ENCODE measurements at regions of chr10 and their contacts with region 1.

Region 1: GRCh38 chr10:26556748-26557640 is 118.9 kb downstream of the APBB1IP start:
- DNase-seq: no peak
- H3K4me3 ChIP-seq: no peak overlapping the region
- H3K27ac ChIP-seq: no peak overlapping the region
- H3K4me1 ChIP-seq: no peaks in the 10 kb centered on the region
- H3K27me3 ChIP-seq: no peaks in the 10 kb centered on the region
- CTCF ChIP-seq: peak; percentile 52 to 77 (median 67)

Region 2: GRCh38 chr10:25875556-25876165 is 681.3 kb before region 1 on chr10:
- intact Hi-C with region 1: loop called (anchors 5 kb)
- DNase-seq: peak in 1 of 2 donors; percentile 74
- H3K4me3 ChIP-seq: no peak overlapping the region
- H3K27ac ChIP-seq: no peak overlapping the region
- H3K4me1 ChIP-seq: no peaks in the 10 kb centered on the region
- H3K27me3 ChIP-seq: no peaks in the 10 kb centered on the region
- CTCF ChIP-seq: peak; percentile 24 to 86 (median 70)

Region 3: DNA sequence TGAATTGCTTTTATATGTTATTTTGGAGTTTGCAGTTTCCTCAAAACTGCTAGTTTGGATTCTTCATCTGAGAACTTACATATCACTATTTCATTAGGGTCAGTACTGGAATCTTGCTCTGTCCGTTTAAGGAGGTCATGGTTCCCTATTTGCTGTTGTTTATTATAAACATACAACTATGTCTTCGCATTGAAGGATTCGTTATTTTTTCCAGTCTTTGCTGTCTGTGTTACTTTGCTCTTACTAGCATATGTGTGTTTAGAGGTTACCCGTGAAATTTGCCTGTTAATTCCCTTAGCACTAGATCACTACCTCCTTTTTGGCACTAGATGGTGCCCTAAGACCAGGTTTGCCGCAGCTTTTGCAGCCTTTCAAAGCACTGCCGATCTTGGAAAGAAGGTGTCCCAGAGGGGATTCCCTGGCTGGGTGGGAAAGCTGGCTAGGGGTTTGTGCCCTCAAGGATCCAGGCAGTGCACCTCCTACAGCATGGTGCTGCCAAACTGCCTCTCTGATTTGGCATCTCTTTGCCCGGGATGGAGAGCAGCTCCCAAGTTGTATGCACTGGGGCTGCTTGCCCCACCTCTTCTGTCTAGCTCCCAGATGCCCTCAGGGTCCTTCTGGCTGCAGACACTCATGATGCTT is 221.9 kb before region 1 on chr10:
- intact Hi-C with region 1: loop called (anchors 2 kb)
- DNase-seq: peak in 1 of 2 donors; percentile 65
- H3K4me3 ChIP-seq: peak overlapping the region in 1 of 2 donors; percentile 35
- H3K27ac ChIP-seq: no peak overlapping the region
- H3K4me1 ChIP-seq: no peaks in the 10 kb centered on the region
- H3K27me3 ChIP-seq: no peaks in the 10 kb centered on the region
- CTCF ChIP-seq: peak; percentile 24 to 53 (median 51)

Region 4: GRCh38 chr10:26612151-26612915 is 55.3 kb after region 1 on chr10:
- intact Hi-C with region 1: no loop called
- DNase-seq: no peak
- H3K4me3 ChIP-seq: no peak overlapping the region
- H3K27ac ChIP-seq: no peak overlapping the region
- H3K4me1 ChIP-seq: no peaks in the 10 kb centered on the region
- H3K27me3 ChIP-seq: no peaks in the 10 kb centered on the region
- CTCF ChIP-seq: no peak